ENCODE measurements at regions of chrX and their contacts with region 1.

Region 1: GRCh38 chrX:109536439-109537336 is at the start of gene NXT2:
- DNase-seq: peak; percentile 79
- H3K4me3 Mint-ChIP-seq: peak within 1 kb of the TSS; percentile 95
- H3K27ac Mint-ChIP-seq: peak within 1 kb of the TSS; percentile 98
- H3K4me1 Mint-ChIP-seq: peaks cover 25% of the 10 kb centered on the region
- H3K27me3 Mint-ChIP-seq: peaks cover 2% of the 10 kb centered on the region
- total RNA-seq, gene NXT2: 10.3 and 11.8 TPM in 2 replicates

Region 2: GRCh38 chrX:109635176-109635575 is 98.5 kb after region 1 on chrX:
- intact Hi-C with region 1: loop called (anchors 5 kb)
- DNase-seq: no peak
- H3K4me3 Mint-ChIP-seq: no peak overlapping the region
- H3K27ac Mint-ChIP-seq: no peak overlapping the region
- H3K4me1 Mint-ChIP-seq: peaks cover 26% of the 10 kb centered on the region
- H3K27me3 Mint-ChIP-seq: no peaks in the 10 kb centered on the region

Region 3: GRCh38 chrX:109782994-109783700 is 246.5 kb after region 1 on chrX:
- intact Hi-C with region 1: loop called (anchors 2 kb)
- DNase-seq: no peak
- H3K4me3 Mint-ChIP-seq: peak overlapping the region; percentile 76
- H3K27ac Mint-ChIP-seq: peak overlapping the region; percentile 92
- H3K4me1 Mint-ChIP-seq: peaks cover 17% of the 10 kb centered on the region
- H3K27me3 Mint-ChIP-seq: no peaks in the 10 kb centered on the region

Region 4: DNA sequence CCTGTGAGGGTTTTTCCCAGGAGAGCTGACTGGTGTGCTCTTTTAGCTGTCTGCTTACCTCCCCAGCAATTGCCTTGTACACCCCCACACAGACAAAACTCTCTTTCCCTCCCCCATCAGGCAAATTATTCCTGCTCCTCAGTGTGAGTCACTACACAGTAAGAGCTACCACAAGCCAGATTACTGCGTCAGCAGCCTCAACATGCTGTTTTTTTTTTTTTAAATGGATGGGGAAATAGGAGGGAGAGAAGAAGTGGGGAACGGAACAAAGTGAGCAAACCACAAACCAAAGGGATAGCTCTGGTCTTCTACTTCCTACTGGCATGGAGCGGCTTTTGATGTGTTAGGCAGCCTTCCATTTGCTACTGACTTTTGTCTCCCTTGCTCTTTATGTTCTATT is 303.9 kb after region 1 on chrX:
- intact Hi-C with region 1: loop called (anchors 5 kb)
- DNase-seq: no peak
- H3K4me3 Mint-ChIP-seq: no peak overlapping the region
- H3K27ac Mint-ChIP-seq: no peak overlapping the region
- H3K4me1 Mint-ChIP-seq: peaks cover 5% of the 10 kb centered on the region
- H3K27me3 Mint-ChIP-seq: no peaks in the 10 kb centered on the region

Region 5: DNA sequence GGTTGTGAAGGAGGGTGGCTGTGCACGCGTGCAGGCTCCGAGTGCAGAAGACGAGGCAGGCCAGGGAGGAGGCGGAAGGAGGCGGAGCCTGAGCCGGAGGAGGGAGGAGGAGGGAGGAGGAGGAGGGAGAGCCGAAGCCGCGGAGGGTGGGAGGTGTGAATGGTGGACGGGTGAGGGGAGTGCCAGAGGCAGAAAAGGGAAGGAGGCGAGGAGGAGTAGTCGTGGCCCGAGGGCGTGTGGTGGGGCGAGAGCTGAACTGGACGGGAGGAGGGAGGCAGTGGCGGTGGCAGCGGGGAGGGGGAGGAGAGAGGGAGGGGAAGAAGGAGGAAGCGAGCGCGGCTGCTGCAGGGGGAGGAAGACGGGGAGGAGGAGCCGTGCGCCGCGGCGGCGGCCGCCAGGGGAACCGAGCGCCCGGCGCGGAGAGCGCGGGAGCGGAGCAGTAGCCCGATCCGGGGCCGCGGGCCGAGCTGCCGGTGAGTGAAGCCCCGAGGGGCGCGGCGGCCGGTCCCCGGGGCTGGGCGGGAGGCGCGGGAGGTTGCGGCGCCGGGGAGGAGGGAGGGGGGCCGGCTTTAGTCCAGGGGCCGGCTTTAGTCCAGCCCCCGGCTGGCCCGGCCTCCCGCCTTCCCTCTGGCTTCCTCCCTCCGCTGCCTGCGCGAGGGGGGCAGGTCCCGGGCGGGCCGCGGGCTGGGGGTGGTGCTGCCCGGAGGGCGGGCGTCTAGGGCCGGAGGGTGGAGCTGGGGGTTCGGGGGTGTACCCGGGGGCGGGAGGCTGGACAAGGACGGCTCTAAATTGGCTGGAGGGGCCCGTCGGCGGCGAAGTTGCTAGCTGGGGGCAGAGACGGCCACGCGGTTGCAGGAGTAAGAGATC is 465.8 kb after region 1 on chrX and contains the start of gene TMEM164:
- intact Hi-C with region 1: loop called (anchors 2 kb)
- DNase-seq: peak; percentile 72
- H3K4me3 Mint-ChIP-seq: peak within 1 kb of the TSS; percentile 92
- H3K27ac Mint-ChIP-seq: peak within 1 kb of the TSS; percentile 92
- H3K4me1 Mint-ChIP-seq: peaks cover 23% of the 10 kb centered on the region
- H3K27me3 Mint-ChIP-seq: no peaks in the 10 kb centered on the region
- total RNA-seq, gene TMEM164: 17.9 and 19.1 TPM in 2 replicates

Measured in activated T-helper 1 cell treated with anti-CD3 and anti-CD28 coated beads, Interleukin-12 subunit alpha, Interleukin-12 subunit beta, Interleukin-2, Interleukin-4 antibody, amounts not matched to agents 30 ng/mL and 10 ng/mL and 1 ng/mL, durations not matched to agents 14 hours and 24 hours and 36 hours (primary cell).